Heart left ventricle (tissue), 16 donors: ENCODE measurements at regions of chr9 and their contacts with region 1.

Region 1: DNA sequence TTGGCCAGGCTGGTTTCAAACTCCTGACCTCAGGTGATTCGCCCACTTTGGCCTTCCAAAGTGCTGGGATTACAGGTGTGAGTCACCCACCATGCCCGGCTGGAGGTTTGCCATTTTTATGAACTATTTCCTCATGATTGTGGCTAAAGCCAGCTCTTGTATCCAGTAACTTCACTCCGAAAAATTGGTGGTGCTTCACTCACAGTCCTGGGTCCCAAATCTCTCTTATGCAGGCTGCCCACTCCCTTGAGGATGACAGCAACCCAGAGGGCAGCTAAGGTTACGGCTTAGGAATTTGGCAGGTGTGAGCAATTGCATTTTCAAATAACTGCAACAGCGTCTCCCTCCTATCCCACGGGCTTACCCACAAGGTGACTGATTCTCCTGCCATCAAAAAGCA is 23.4 kb upstream of the FUBP3 start:
- DNase-seq: no peak
- ATAC-seq: no peak
- H3K4me3 ChIP-seq: no peak overlapping the region
- H3K27ac ChIP-seq: no peak overlapping the region
- H3K4me1 ChIP-seq: no peaks in the 10 kb centered on the region
- H3K27me3 ChIP-seq: peaks cover 0 to 8% (median 0%) of the 10 kb centered on the region in 9 donors
- CTCF ChIP-seq: no peak
- POLR2A ChIP-seq: no peak

Region 2: DNA sequence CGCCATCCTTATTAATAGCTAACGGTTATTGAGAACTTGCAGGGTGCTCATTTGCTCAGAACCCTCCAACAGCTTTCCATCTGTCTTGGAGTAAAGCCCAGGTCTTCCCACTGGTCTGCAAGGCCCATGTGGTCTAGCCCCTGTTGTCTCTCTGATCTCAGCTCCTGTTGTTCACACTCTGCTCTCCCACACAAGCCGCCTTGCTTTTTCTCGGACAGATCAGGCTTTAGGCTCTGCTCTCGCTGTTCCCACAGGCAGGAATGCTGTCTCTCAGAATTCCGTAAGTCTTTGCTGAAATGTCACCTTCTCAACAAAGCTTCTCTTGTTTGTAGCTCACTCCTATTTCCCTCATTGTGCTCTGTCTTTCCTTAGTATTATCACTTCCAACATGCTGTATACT is 467.9 kb before region 1 on chr9:
- intact Hi-C with region 1: loop called in 1 of 10 experiments (anchors 10 kb)
- DNase-seq: no peak
- ATAC-seq: no peak
- H3K4me3 ChIP-seq: no peak overlapping the region
- H3K27ac ChIP-seq: no peak overlapping the region
- H3K4me1 ChIP-seq: no peaks in the 10 kb centered on the region
- H3K27me3 ChIP-seq: no peaks in the 10 kb centered on the region
- CTCF ChIP-seq: no peak
- POLR2A ChIP-seq: no peak

Region 3: GRCh38 chr9:130352081-130352480 is 203.9 kb before region 1 on chr9:
- intact Hi-C with region 1: no loop called
- DNase-seq: no peak
- ATAC-seq: no peak
- H3K4me3 ChIP-seq: no peak overlapping the region
- H3K27ac ChIP-seq: no peak overlapping the region
- H3K4me1 ChIP-seq: no peaks in the 10 kb centered on the region
- H3K27me3 ChIP-seq: no peaks in the 10 kb centered on the region
- CTCF ChIP-seq: no peak
- POLR2A ChIP-seq: no peak